Common myeloid progenitor, CD34-positive (primary cell): ENCODE measurements at regions of chrX and their contacts with region 1.

Region 1: DNA sequence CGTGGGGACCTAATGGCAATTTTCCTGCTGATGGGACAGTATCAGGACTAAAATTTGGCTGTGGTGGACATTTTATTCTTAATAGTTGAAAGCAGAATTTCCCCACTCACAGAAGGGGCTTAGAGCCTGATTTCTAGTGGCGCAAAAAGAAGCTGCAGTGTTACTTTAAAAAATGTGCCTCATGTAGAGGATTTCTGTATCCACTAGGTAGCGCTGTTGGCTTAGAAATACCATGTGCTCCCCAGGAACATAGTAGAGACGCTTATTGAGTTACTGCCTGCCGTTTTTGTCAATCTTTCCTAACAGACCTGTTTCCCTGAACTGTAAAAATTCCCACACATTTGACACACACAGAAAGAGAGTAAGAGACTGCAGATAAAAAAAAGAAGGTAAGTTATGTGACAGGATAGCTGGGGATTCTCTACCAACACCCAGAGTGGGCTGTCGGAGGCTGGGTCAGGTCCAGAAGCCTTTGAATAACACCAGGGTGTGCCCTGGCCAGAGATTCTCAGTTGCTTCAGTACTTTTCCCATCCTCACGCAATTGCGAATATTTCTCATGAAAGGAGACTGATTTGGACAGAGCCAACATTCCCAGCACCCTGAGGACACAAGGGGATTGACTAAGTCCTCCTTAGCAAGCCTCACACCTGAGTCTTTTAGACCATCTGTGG is 88.4 kb downstream of the ZXDA start:
- DNase-seq: peak; percentile 59 to 85 (median 80)
- H3K4me3 ChIP-seq: no peak overlapping the region
- H3K27ac ChIP-seq: no peak overlapping the region
- H3K4me1 ChIP-seq: no peaks in the 10 kb centered on the region
- H3K27me3 ChIP-seq: no peaks in the 10 kb centered on the region

Region 2: DNA sequence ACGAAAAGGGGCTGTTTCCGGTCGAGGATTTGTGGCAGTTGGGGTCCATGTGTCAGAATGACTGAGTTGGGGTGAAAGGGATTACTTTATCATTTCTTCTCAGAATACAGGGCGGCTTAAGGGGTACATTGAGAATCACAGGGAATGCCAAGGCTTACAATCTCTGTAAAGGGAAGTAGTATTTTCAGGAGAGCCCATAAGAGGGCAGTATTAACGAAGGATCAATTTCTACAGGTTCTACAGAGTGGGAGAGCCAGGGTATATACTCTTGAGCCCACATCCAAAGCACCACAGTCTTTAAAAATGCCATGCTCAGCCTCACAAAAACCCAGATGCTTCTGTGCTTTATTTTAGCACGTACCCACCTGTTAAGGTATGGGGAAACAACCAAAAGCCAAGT is 156.2 kb after region 1 on chrX:
- CTCF ChIA-PET with region 1: no interaction called
- POLR2A ChIA-PET with region 1: no interaction called
- DNase-seq: no peak
- H3K4me3 ChIP-seq: no peak overlapping the region
- H3K27ac ChIP-seq: no peak overlapping the region
- H3K4me1 ChIP-seq: no peaks in the 10 kb centered on the region
- H3K27me3 ChIP-seq: no peaks in the 10 kb centered on the region

Region 3: DNA sequence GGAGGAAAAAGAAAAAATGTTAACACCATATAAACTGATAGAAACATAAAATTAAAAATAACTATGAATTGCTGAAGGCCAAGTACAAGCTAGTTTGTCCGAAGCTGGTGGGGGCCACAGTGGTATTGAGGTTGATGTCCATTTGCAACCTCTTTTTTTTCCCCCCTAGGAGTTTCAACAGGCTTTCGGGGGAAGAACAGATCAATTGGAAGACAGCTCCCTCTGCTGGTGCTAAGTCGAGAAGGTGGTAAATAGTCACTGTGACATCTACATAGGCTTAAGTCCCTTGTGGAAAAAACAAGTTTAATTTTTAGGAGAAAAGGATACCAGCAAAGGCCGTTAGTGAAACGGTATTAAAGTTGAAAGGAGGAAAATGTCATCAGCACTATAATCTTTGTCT is 204.1 kb after region 1 on chrX:
- CTCF ChIA-PET with region 1: interaction called, 43 read pairs
- POLR2A ChIA-PET with region 1: no interaction called
- DNase-seq: peak; percentile 54 to 77 (median 71)
- H3K4me3 ChIP-seq: no peak overlapping the region
- H3K27ac ChIP-seq: no peak overlapping the region
- H3K4me1 ChIP-seq: peaks cover 0 to 8% (median 5%) of the 10 kb centered on the region in 4 experiments
- H3K27me3 ChIP-seq: no peaks in the 10 kb centered on the region